Dorsolateral prefrontal cortex (tissue), 120 donors: ENCODE measurements at regions of chr11 and their contacts with region 1.

Region 1: DNA sequence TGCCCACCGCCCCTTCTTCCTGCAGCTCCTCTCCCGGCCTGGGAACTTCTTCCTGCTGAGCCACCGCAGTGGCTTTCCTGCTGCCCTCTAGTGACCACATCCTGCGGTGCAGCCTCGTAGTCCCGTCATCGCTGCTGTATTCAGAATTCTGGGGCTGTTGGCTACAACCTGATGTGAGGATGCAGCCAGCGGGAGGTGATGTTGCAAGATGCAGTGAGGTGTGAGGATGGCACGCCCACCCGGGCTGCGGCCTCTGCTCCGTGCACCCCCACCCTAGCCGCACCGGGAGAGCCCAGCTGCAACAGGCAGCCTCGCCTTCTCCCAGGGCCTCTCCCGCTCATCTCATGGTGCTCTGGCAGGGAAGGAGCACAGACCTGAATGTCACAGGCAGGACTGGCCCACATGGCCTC is 10.1 kb downstream of the CHST1 start:
- DNase-seq: peak; percentile 78 to 89 (median 85)
- H3K4me3 ChIP-seq: peak overlapping the region in 19 of 59 donors; percentile 1 to 32 (median 9)
- H3K27ac ChIP-seq: peak overlapping the region in 51 of 59 donors; percentile 15 to 94 (median 65)
- H3K27me3 ChIP-seq: no peaks in the 10 kb centered on the region
- CTCF ChIP-seq: peak; percentile 75 to 95 (median 91)

Region 2: GRCh38 chr11:45365961-45366618 is 289.3 kb before region 1 on chr11:
- intact Hi-C with region 1: loop called (anchors 5 kb)
- DNase-seq: peak in 5 of 10 donors; percentile 22 to 61 (median 52)
- H3K4me3 ChIP-seq: peak overlapping the region in 29 of 59 donors; percentile 2 to 46 (median 24)
- H3K27ac ChIP-seq: peak overlapping the region in 45 of 59 donors; percentile 4 to 76 (median 54)
- H3K27me3 ChIP-seq: peaks cover 0 to 2% (median 0%) of the 10 kb centered on the region in 45 donors
- CTCF ChIP-seq: peak in 5 of 56 donors; percentile 9 to 29 (median 10)

Region 3: GRCh38 chr11:45371251-45372115 is 283.9 kb before region 1 on chr11:
- intact Hi-C with region 1: loop called (anchors 5 kb)
- DNase-seq: peak; percentile 60 to 87 (median 83)
- H3K4me3 ChIP-seq: peak overlapping the region in 54 of 59 donors; percentile 2 to 58 (median 40)
- H3K27ac ChIP-seq: peak overlapping the region in 50 of 59 donors; percentile 5 to 89 (median 66)
- H3K27me3 ChIP-seq: peaks cover 0 to 8% (median 0%) of the 10 kb centered on the region in 45 donors
- CTCF ChIP-seq: peak; percentile 78 to 98 (median 93)

Region 4: DNA sequence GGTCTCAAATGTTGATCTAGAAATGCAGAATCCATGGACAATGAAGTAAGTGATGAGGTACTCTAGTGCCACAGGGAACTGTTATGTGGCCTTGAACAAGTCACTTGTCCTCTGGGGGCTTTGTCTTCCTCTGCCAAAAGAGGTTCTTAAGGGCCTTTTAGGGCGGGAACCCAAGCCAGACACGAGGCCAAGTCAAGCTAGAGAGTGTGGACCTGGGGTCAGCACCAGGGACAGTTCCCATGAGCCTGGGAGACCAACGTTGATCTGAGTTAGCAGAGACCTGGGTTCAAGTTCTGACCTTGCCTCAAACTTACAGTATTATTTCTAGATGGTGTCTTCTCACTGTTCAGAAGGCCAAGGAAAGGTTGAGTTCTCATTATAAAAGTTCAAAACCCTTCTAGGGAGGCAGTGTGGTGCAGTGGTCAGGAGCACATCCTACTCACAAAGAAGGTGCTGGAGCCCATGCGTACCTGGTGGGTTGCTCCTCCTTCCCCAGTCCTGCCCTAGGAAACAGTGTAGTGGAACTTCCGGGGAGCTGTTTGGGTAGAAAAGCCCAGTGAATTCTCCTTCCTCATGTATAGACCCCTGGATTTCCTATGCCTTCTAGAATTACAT is 111.4 kb before region 1 on chr11:
- intact Hi-C with region 1: loop called in 1 of 2 experiments (anchors 10 kb)
- DNase-seq: no peak
- H3K4me3 ChIP-seq: no peak overlapping the region
- H3K27ac ChIP-seq: peak overlapping the region in 37 of 59 donors; percentile 1 to 92 (median 78)
- H3K27me3 ChIP-seq: peaks cover 0 to 7% (median 0%) of the 10 kb centered on the region in 45 donors
- CTCF ChIP-seq: no peak